HepG2 (cell line): ENCODE measurements at regions of chr12 and their contacts with region 1.

Region 1: DNA sequence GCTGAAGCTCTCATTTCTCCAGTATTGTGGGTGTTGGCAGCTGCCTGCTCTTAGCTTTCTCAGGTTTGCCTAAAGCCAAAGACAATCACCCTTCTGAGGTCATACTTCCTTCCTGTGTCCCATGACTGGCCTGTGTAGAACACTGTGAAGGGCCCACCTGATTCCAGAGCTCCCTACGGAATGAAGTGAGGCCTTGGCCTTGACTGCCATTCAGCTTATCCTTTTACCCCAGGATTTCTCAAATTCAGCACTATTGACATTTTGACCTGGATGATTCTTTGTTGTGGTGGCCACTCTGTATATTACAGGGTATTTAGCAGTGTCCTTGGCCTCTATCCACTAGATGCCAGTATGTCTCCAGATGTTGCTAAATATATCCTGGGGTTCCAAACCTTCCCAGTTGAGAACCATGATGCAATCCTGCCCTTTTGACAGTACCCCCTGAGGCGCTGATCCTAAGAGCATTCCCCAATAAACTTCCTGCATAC is 112.3 kb upstream of the KRR1 start:
- DNase-seq: peak; percentile 87
- ATAC-seq: peak; percentile 99
- H3K4me3 ChIP-seq: no peak overlapping the region; a peak in 1 of 6 replicates
- H3K27ac ChIP-seq: no peak overlapping the region
- H3K4me1 ChIP-seq: peaks cover 40% of the 10 kb centered on the region
- H3K27me3 ChIP-seq: no peaks in the 10 kb centered on the region
- CTCF ChIP-seq: peak; percentile 82
- EP300 ChIP-seq: peak in 1 of 2 experiments; percentile 91; a peak in 2 of 4 replicates
- POLR2A ChIP-seq: no peak
- RAD21 ChIP-seq: peak; percentile 87

Region 2: DNA sequence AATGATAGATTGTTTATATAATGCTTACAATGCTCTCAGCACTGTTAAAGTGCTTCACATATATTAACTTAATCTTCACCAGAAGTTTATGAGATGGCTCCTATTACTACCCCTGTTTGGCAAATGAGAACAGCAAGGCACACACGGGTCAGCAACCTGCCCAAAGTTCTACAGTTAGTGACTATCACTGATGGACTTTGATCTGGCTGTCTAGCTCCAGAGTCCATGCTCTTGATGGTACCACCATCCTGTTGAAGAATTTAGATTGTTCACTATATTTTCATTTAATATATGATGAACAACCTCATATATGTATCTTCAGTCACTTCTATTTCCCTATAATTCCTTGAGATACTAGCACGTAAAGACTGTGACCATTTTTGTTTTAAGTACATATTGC is 132.5 kb before region 1 on chr12:
- CTCF ChIA-PET with region 1: no interaction called
- POLR2A ChIA-PET with region 1: no interaction called
- in situ Hi-C with region 1: no loop called
- intact Hi-C with region 1: no loop called
- DNase-seq: peak; percentile 25
- ATAC-seq: peak; percentile 26; the same call in 1 of the 3 replicates
- H3K4me3 ChIP-seq: no peak overlapping the region
- H3K27ac ChIP-seq: no peak overlapping the region
- H3K4me1 ChIP-seq: peaks cover 6% of the 10 kb centered on the region
- H3K27me3 ChIP-seq: no peaks in the 10 kb centered on the region; a peak in 1 of 5 replicates
- CTCF ChIP-seq: no peak
- EP300 ChIP-seq: no peak
- POLR2A ChIP-seq: no peak
- RAD21 ChIP-seq: no peak

Region 3: DNA sequence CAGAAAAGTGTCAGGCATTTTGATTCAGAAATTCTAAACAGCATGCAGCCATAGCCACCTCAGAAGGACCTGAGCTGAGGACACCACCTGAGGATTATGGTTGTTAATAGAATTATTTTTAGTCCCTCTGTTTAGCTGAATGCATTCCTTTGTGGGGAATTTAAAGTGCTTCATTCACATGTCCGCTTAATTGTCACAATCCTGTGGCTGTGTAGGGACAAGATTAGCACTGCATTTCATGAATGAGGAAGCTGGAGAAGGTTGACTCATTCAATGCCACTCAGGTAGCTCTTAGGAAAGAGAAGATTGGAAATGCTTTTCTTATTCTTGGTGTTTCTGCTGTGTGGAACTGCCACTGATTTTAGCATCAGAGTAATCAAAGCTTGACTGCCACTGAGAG is 70.3 kb before region 1 on chr12:
- CTCF ChIA-PET with region 1: no interaction called
- POLR2A ChIA-PET with region 1: no interaction called
- in situ Hi-C with region 1: no loop called
- intact Hi-C with region 1: loop called (anchors 2 kb)
- DNase-seq: no peak
- ATAC-seq: no peak
- H3K4me3 ChIP-seq: no peak overlapping the region
- H3K27ac ChIP-seq: no peak overlapping the region
- H3K4me1 ChIP-seq: peaks cover 41% of the 10 kb centered on the region
- H3K27me3 ChIP-seq: no peaks in the 10 kb centered on the region
- CTCF ChIP-seq: no peak
- EP300 ChIP-seq: no peak
- POLR2A ChIP-seq: no peak
- RAD21 ChIP-seq: no peak

Region 4: DNA sequence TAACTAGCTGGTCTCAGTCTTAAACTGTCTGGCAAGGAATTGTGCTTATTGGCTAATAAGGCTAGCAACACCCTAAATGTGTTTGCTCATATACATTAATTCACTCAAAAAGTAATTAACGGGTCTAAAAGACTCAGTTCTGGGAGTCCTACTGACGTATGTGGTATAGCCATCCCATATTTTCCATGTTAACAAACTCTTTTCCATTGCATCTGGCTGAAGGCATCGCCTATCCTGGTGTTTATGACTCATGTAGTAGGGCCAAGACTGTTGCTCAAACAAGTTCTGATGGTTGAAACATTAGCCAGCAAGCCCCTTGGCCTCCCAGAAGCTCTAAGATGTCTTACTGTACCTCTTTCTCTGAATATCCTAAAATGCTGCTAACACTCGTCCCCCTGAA is 309.4 kb after region 1 on chr12:
- CTCF ChIA-PET with region 1: no interaction called
- POLR2A ChIA-PET with region 1: no interaction called
- in situ Hi-C with region 1: no loop called
- intact Hi-C with region 1: loop called (anchors 10 kb)
- DNase-seq: no peak
- ATAC-seq: no peak
- H3K4me3 ChIP-seq: no peak overlapping the region
- H3K27ac ChIP-seq: no peak overlapping the region
- H3K4me1 ChIP-seq: peaks cover 69% of the 10 kb centered on the region
- H3K27me3 ChIP-seq: no peaks in the 10 kb centered on the region
- CTCF ChIP-seq: no peak
- EP300 ChIP-seq: peak in 1 of 2 experiments; percentile 4; a peak in 1 of 4 replicates
- POLR2A ChIP-seq: no peak
- RAD21 ChIP-seq: no peak

Region 5: GRCh38 chr12:76037130-76038103 is 413.7 kb after region 1 on chr12:
- CTCF ChIA-PET with region 1: no interaction called
- POLR2A ChIA-PET with region 1: interaction called, 51 read pairs
- in situ Hi-C with region 1: loop called (anchors 5 kb)
- intact Hi-C with region 1: loop called (anchors 1 kb)
- DNase-seq: peak; percentile 77
- ATAC-seq: peak; percentile 44
- H3K4me3 ChIP-seq: no peak overlapping the region
- H3K27ac ChIP-seq: no peak overlapping the region
- H3K4me1 ChIP-seq: peaks cover 74% of the 10 kb centered on the region
- H3K27me3 ChIP-seq: no peaks in the 10 kb centered on the region; a peak in 1 of 5 replicates
- CTCF ChIP-seq: peak; percentile 83
- EP300 ChIP-seq: no peak
- POLR2A ChIP-seq: no peak
- RAD21 ChIP-seq: peak; percentile 87